ENCODE measurements at regions of chr3 and their contacts with region 1.

Region 1: GRCh38 chr3:60081381-60082095 is 1031.7 kb upstream of the CFAP20DC start:
- DNase-seq: no peak
- H3K4me3 Mint-ChIP-seq: peak overlapping the region; percentile 79
- H3K27ac Mint-ChIP-seq: peak overlapping the region; percentile 95
- H3K4me1 Mint-ChIP-seq: peaks cover 87% of the 10 kb centered on the region
- H3K27me3 Mint-ChIP-seq: no peaks in the 10 kb centered on the region

Region 2: DNA sequence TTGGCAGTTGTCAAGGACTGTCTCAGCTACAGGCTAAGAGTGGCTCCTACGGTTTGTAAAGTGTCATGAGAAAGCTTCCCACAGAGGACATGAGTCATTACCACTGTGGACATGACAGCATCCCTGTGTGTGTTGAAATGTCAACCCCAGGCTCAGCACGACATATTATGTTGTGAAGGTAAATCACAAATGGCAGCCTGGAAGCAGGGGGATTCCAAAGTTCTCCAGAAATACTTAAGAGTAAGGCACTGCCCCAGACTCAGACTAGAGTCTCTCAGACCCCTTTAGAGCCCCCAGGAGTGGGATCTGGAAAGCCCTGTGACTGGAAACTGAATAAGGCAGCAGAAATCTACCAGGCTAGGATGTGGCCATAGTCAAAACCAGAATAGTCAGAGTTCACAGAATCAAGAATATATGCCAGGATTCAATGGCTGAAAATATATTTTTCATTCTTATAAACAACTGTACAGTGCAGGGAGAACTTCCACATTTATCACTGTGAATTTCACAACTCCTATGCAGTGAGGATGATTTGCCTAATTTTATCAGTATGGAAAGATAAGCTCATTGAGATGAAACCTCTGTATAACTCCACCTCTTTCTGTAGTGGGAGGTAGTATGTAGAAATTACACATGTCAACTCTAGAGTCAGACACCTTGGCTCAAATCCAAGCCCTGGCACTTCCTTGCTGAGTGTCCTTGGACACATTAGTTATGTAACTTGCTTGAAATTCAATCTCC is 794.6 kb before region 1 on chr3:
- intact Hi-C with region 1: loop called (anchors 5 kb)
- DNase-seq: peak; percentile 29
- H3K4me3 Mint-ChIP-seq: peak overlapping the region; percentile 1
- H3K27ac Mint-ChIP-seq: peak overlapping the region; percentile 91
- H3K4me1 Mint-ChIP-seq: peaks cover 37% of the 10 kb centered on the region
- H3K27me3 Mint-ChIP-seq: no peaks in the 10 kb centered on the region

Region 3: GRCh38 chr3:59857589-59858346 is 223.8 kb before region 1 on chr3:
- intact Hi-C with region 1: loop called (anchors 10 kb)
- DNase-seq: peak; percentile 51
- H3K4me3 Mint-ChIP-seq: no peak overlapping the region
- H3K27ac Mint-ChIP-seq: peak overlapping the region; percentile 19
- H3K4me1 Mint-ChIP-seq: peaks cover 12% of the 10 kb centered on the region
- H3K27me3 Mint-ChIP-seq: no peaks in the 10 kb centered on the region

Region 4: DNA sequence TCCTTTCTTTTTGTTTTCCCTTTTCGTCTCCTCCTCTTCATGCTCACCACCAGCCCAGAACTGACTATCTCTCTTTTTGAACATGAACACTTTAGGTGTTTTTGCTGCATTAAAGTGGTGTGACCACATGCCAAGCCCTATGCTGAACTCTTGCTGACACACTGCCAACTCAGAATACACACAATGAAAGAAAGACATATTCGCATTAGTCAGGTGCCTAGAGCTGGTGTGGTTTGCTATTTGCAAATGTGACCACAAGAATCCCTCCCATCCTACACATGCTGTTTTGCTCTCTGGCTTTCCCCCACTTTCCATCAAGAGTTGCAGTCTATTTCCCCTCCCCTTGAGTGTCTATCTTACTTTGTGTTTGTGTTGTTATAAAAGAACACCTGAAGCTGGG is 63.9 kb before region 1 on chr3:
- intact Hi-C with region 1: loop called (anchors 1 kb)
- DNase-seq: peak; percentile 66
- H3K4me3 Mint-ChIP-seq: peak overlapping the region; percentile 74
- H3K27ac Mint-ChIP-seq: peak overlapping the region; percentile 96
- H3K4me1 Mint-ChIP-seq: peaks cover 67% of the 10 kb centered on the region
- H3K27me3 Mint-ChIP-seq: peaks cover 2% of the 10 kb centered on the region

Region 5: GRCh38 chr3:60101621-60102020 is 20.1 kb after region 1 on chr3:
- intact Hi-C with region 1: loop called (anchors 2 kb)
- DNase-seq: no peak
- H3K4me3 Mint-ChIP-seq: no peak overlapping the region
- H3K27ac Mint-ChIP-seq: no peak overlapping the region
- H3K4me1 Mint-ChIP-seq: peaks cover 24% of the 10 kb centered on the region
- H3K27me3 Mint-ChIP-seq: no peaks in the 10 kb centered on the region

Region 6: GRCh38 chr3:60147249-60147950 is 65.9 kb after region 1 on chr3:
- intact Hi-C with region 1: no loop called
- DNase-seq: no peak
- H3K4me3 Mint-ChIP-seq: no peak overlapping the region
- H3K27ac Mint-ChIP-seq: no peak overlapping the region
- H3K4me1 Mint-ChIP-seq: peaks cover 10% of the 10 kb centered on the region
- H3K27me3 Mint-ChIP-seq: no peaks in the 10 kb centered on the region

Region 7: GRCh38 chr3:61251174-61251972 is 1169.8 kb after region 1 on chr3 and contains the start of gene FHIT:
- intact Hi-C with region 1: loop called (anchors 5 kb)
- DNase-seq: peak; percentile 90
- H3K4me3 Mint-ChIP-seq: peak within 1 kb of the TSS; percentile 96
- H3K27ac Mint-ChIP-seq: peak within 1 kb of the TSS; percentile 94
- H3K4me1 Mint-ChIP-seq: peaks cover 30% of the 10 kb centered on the region
- H3K27me3 Mint-ChIP-seq: peaks cover 12% of the 10 kb centered on the region
- total RNA-seq, gene FHIT: 19.9 and 22.6 TPM in 2 replicates

Measured in activated T-helper 1 cell treated with anti-CD3 and anti-CD28 coated beads, Interleukin-12 subunit alpha, Interleukin-12 subunit beta, Interleukin-2, Interleukin-4 antibody, amounts not matched to agents 30 ng/mL and 10 ng/mL and 1 ng/mL, durations not matched to agents 14 hours and 24 hours and 36 hours (primary cell).